MCF 10A (cell line): ENCODE measurements at regions of chr14 and their contacts with region 1.

Region 1: GRCh38 chr14:54396493-54397335 is at the start of gene CDKN3:
- DNase-seq: peak; percentile 100
- H3K4me3 Mint-ChIP-seq: peak within 1 kb of the TSS; percentile 85
- H3K27ac Mint-ChIP-seq: peak within 1 kb of the TSS; percentile 37
- H3K4me1 Mint-ChIP-seq: peaks cover 16% of the 10 kb centered on the region
- H3K27me3 Mint-ChIP-seq: no peaks in the 10 kb centered on the region
- CTCF ChIP-seq: peak; percentile 45
- total RNA-seq, gene CDKN3: 66.4 and 66.5 TPM in 2 replicates

Region 2: GRCh38 chr14:54312140-54312801 is 84.4 kb before region 1 on chr14:
- CTCF ChIA-PET with region 1: no interaction called
- POLR2A ChIA-PET with region 1: no interaction called
- intact Hi-C with region 1: no loop called
- DNase-seq: peak; percentile 99
- H3K4me3 Mint-ChIP-seq: peak overlapping the region; percentile 9
- H3K27ac Mint-ChIP-seq: peak overlapping the region; percentile 95
- H3K4me1 Mint-ChIP-seq: peaks cover 42% of the 10 kb centered on the region
- H3K27me3 Mint-ChIP-seq: no peaks in the 10 kb centered on the region
- CTCF ChIP-seq: no peak

Region 3: DNA sequence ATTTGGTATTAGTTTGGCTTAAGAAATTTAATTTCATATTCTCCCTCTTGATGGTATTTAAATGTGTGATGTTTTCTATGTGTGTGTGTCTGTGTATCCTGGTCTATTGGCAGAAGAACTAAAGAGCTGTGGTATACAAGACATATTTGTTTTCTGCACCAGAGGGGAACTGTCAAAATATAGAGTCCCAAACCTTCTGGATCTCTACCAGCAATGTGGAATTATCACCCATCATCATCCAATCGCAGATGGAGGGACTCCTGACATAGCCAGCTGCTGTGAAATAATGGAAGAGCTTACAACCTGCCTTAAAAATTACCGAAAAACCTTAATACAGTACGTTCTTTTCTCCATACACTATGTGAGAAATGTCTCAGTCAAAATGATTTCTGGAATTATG is 14.7 kb after region 1 on chr14:
- CTCF ChIA-PET with region 1: interaction called, 5 read pairs
- POLR2A ChIA-PET with region 1: interaction called, 16 read pairs
- intact Hi-C with region 1: no loop called
- DNase-seq: no peak
- H3K4me3 Mint-ChIP-seq: no peak overlapping the region
- H3K27ac Mint-ChIP-seq: no peak overlapping the region
- H3K4me1 Mint-ChIP-seq: no peaks in the 10 kb centered on the region
- H3K27me3 Mint-ChIP-seq: no peaks in the 10 kb centered on the region
- CTCF ChIP-seq: no peak